Activated naive CD4-positive, alpha-beta T cell treated with anti-CD3 and anti-CD28 coated beads for 36 hours (primary cell): ENCODE measurements at regions of chr16 and their contacts with region 1.

Region 1: DNA sequence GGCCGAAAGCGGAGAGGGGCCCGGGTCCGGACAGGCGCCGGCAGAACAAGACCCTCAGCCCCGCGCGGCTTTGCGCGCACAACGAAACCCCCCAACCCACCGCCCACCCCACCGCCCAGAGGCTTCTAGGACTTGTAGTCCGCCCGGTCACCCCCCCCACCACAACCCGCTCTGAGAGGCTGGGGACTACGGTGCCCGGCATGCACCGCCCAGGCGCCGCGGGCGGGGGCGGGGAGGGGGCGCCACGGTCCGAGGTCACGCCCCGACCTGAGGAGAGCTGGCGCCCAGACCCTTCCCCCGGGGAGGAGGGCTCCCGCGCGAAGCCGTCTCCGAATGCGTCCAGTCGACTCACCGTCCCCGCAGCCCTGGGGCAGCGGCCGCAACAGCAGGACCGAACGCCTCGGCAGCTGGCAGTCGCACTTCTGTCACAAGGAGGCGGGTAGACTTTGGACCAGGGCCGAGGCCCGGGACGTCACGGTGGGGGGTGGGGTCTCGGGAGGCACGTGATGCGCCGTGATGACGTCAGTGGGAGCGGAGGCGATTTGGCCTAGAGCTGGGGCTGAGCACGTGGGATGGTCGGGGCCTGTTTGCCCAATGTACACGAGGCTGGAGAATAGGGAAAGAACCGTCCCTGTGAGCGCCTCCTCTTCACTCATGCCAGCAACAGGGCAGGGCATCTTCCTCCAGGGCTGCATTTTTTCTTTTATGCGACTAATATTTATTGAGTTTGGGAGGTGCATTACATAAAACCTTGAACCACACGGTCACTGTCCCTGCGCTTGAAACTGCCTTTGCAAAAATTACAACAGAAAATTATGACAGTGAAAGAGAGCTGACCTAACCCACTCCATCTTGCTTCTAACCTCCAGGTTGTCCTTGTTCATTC is at the start of gene CDIP1:
- DNase-seq: peak; percentile 99
- H3K4me3 Mint-ChIP-seq: peak within 1 kb of the TSS; percentile 77
- H3K27ac Mint-ChIP-seq: peak within 1 kb of the TSS; percentile 54
- H3K4me1 Mint-ChIP-seq: peaks cover 41% of the 10 kb centered on the region
- H3K27me3 Mint-ChIP-seq: no peaks in the 10 kb centered on the region
- total RNA-seq, gene CDIP1: 31.9 to 35.7 TPM

Region 2: GRCh38 chr16:4660454-4661007 is 121.9 kb after region 1 on chr16:
- CTCF ChIA-PET with region 1: no interaction called
- intact Hi-C with region 1: no loop called
- DNase-seq: peak; percentile 89
- H3K4me3 Mint-ChIP-seq: no peak overlapping the region
- H3K27ac Mint-ChIP-seq: peak overlapping the region; percentile 61
- H3K4me1 Mint-ChIP-seq: peaks cover 65% of the 10 kb centered on the region
- H3K27me3 Mint-ChIP-seq: no peaks in the 10 kb centered on the region

Region 3: GRCh38 chr16:4802659-4803287 is 264.2 kb after region 1 on chr16:
- CTCF ChIA-PET with region 1: no interaction called
- intact Hi-C with region 1: loop called (anchors 1 kb)
- DNase-seq: peak; percentile 87
- H3K4me3 Mint-ChIP-seq: peak overlapping the region; percentile 77
- H3K27ac Mint-ChIP-seq: no peak overlapping the region
- H3K4me1 Mint-ChIP-seq: peaks cover 9% of the 10 kb centered on the region
- H3K27me3 Mint-ChIP-seq: no peaks in the 10 kb centered on the region